Psoas muscle (tissue), 8 donors: ENCODE measurements at regions of chr9 and their contacts with region 1.

Region 1: GRCh38 chr9:11868795-11869194 is 824.4 kb upstream of the TYRP1 start:
- DNase-seq: no peak
- ATAC-seq: no peak
- H3K4me3 ChIP-seq: no peak overlapping the region
- H3K27ac ChIP-seq: no peak overlapping the region
- H3K4me1 ChIP-seq: no peaks in the 10 kb centered on the region
- H3K27me3 ChIP-seq: no peaks in the 10 kb centered on the region
- CTCF ChIP-seq: no peak

Region 2: DNA sequence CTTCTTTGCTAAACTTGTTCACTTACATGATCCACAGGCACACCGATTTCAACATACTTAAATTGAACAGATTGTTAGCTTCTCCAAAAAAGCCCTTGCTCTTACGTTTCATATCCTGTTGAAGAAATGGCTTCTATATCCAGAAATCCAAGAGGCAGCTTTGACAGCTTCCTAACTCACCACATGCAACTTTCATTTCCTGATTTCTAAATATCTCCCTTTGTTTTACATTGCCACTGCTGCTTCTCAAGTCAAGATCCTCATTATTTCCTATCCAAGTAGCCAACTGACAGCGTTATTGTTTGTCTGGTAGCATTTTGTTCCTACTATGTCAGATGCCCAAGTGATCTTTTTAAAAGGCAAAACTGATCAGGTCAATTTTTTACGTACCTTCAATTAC is 88.8 kb before region 1 on chr9:
- intact Hi-C with region 1: no loop called
- DNase-seq: no peak
- ATAC-seq: no peak
- H3K4me3 ChIP-seq: no peak overlapping the region
- H3K27ac ChIP-seq: no peak overlapping the region
- H3K4me1 ChIP-seq: no peaks in the 10 kb centered on the region
- H3K27me3 ChIP-seq: no peaks in the 10 kb centered on the region
- CTCF ChIP-seq: no peak

Region 3: GRCh38 chr9:12629067-12629466 is 760.3 kb after region 1 on chr9:
- intact Hi-C with region 1: loop called in 1 of 2 experiments (anchors 10 kb)
- DNase-seq: no peak
- ATAC-seq: no peak
- H3K4me3 ChIP-seq: no peak overlapping the region
- H3K27ac ChIP-seq: no peak overlapping the region
- H3K4me1 ChIP-seq: no peaks in the 10 kb centered on the region
- H3K27me3 ChIP-seq: no peaks in the 10 kb centered on the region
- CTCF ChIP-seq: no peak